Dendritic cell treated with granulocyte-macrophage colony-stimulating factor and Interleukin-4, amounts not matched to agents 40 ng/mL and 50 ng/mL, for 4 days (primary cell): ENCODE measurements at regions of chr14 and their contacts with region 1.

Region 1: DNA sequence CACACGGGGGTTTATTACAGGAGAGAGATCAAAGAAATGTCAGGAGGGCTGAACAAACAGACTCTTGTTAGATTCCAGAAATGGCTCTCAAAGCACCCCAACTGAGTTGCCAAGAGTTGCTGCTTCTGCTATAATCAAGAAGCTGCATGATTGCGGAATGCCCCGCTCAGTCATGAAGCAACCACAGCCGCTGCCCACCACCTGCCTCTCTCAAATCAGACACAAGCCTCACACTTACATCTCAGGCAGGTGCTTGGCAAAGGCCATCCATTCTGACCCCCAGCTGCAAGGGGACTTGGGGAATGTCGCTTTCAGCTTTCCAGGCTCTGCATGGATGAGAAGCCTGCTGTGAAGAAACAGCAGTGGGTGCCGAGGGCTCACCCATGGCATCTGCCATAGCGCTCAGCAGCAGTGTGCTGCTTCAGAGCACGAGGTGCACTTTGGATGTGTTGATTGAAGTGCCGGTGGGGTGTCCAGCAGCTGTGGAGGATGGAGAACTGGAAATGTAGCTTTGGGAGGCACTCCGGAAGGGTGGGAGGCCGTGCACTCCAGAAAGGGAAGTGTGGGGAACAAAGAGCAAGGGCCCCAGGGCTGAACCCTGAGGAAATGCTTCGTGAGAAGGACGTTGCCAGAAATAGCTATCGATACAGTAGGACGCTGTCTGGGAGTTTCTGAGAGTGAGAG is 37.7 kb downstream of the LRRC74A start:
- H3K4me3 Mint-ChIP-seq: peak overlapping the region; percentile 51
- H3K27ac Mint-ChIP-seq: peak overlapping the region; percentile 80
- H3K4me1 Mint-ChIP-seq: peaks cover 74% of the 10 kb centered on the region
- H3K27me3 Mint-ChIP-seq: no peaks in the 10 kb centered on the region

Region 2: GRCh38 chr14:76812211-76813044 is 51.4 kb before region 1 on chr14 and contains the start of gene ANGEL1:
- intact Hi-C with region 1: loop called (anchors 5 kb)
- H3K4me3 Mint-ChIP-seq: peak within 1 kb of the TSS; percentile 91
- H3K27ac Mint-ChIP-seq: peak within 1 kb of the TSS; percentile 81
- H3K4me1 Mint-ChIP-seq: peaks cover 38% of the 10 kb centered on the region
- H3K27me3 Mint-ChIP-seq: no peaks in the 10 kb centered on the region